Activated CD4-positive, alpha-beta T cell treated with anti-CD3 and anti-CD28 coated beads for 36 hours (primary cell): ENCODE measurements at regions of chr15 and their contacts with region 1.

Region 1: GRCh38 chr15:50315814-50316630 is 39.0 kb downstream of the GABPB1 start:
- DNase-seq: no peak
- ATAC-seq: no peak
- H3K4me3 Mint-ChIP-seq: no peak overlapping the region
- H3K27ac Mint-ChIP-seq: no peak overlapping the region
- H3K4me1 Mint-ChIP-seq: peaks cover 25% of the 10 kb centered on the region
- H3K27me3 Mint-ChIP-seq: no peaks in the 10 kb centered on the region

Region 2: GRCh38 chr15:49235446-49236124 is 1080.4 kb before region 1 on chr15:
- CTCF ChIA-PET with region 1: no interaction called
- POLR2A ChIA-PET with region 1: no interaction called
- intact Hi-C with region 1: loop called in 1 of 2 experiments (anchors 10 kb)
- DNase-seq: peak; percentile 60
- ATAC-seq: peak; percentile 80
- H3K4me3 Mint-ChIP-seq: no peak overlapping the region
- H3K27ac Mint-ChIP-seq: no peak overlapping the region
- H3K4me1 Mint-ChIP-seq: peaks cover 4% of the 10 kb centered on the region
- H3K27me3 Mint-ChIP-seq: no peaks in the 10 kb centered on the region

Region 3: DNA sequence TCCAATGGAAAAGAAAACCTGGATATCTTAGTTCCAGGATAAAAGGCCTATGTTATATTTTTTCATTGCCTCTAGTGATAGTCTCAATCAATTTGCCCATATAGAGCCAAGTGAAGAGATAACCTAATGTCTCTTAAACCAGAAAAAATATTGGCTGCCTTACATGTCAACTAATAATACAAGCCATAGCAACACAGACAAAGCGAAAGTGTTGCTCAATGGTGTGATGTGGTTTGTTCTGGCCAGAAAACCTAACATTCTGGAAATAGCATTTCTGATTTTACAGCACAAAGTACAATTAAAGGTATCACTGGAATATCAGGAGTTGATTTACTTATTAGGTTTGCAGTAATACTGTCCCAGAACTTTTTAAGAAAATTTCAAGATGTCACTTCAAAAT is 298.5 kb before region 1 on chr15:
- CTCF ChIA-PET with region 1: no interaction called
- POLR2A ChIA-PET with region 1: no interaction called
- intact Hi-C with region 1: loop called in 1 of 2 experiments (anchors 10 kb)
- DNase-seq: no peak
- ATAC-seq: no peak
- H3K4me3 Mint-ChIP-seq: no peak overlapping the region
- H3K27ac Mint-ChIP-seq: no peak overlapping the region
- H3K4me1 Mint-ChIP-seq: no peaks in the 10 kb centered on the region
- H3K27me3 Mint-ChIP-seq: peaks cover 4% of the 10 kb centered on the region

Region 4: GRCh38 chr15:50145451-50145872 is 170.6 kb before region 1 on chr15:
- CTCF ChIA-PET with region 1: interaction called, 11 read pairs
- POLR2A ChIA-PET with region 1: no interaction called
- intact Hi-C with region 1: loop called (anchors 2 to 10 kb)
- DNase-seq: no peak
- ATAC-seq: no peak
- H3K4me3 Mint-ChIP-seq: no peak overlapping the region
- H3K27ac Mint-ChIP-seq: no peak overlapping the region
- H3K4me1 Mint-ChIP-seq: peaks cover 32% of the 10 kb centered on the region
- H3K27me3 Mint-ChIP-seq: no peaks in the 10 kb centered on the region

Region 5: DNA sequence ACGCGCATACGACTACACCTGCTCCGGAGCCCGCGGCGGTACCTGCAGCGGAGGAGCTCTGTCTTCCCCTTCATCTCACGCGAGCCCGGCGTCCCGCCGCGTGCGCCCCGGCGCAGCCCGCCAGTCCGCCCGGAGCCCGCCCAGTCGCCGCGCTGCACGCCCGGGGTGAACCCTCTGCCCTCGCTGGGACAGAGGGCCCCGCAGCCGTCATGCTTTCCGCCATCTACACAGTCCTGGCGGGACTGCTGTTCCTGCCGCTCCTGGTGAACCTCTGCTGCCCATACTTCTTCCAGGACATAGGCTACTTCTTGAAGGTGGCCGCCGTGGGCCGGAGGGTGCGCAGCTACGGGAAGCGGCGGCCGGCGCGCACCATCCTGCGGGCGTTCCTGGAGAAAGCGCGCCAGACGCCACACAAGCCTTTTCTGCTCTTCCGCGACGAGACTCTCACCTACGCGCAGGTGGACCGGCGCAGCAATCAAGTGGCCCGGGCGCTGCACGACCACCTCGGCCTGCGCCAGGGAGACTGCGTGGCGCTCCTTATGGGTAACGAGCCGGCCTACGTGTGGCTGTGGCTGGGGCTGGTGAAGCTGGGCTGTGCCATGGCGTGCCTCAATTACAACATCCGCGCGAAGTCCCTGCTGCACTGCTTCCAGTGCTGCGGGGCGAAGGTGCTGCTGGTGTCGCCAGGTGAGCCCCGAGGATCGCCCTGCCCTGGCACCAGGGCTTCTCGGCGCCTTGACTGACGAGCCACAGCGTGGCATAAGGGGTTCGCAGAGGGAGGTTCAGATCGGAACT is 133.6 kb before region 1 on chr15:
- CTCF ChIA-PET with region 1: interaction called, 10 read pairs
- POLR2A ChIA-PET with region 1: no interaction called
- intact Hi-C with region 1: loop called (anchors 1 to 2 kb)
- DNase-seq: peak; percentile 73
- ATAC-seq: peak; percentile 68
- H3K4me3 Mint-ChIP-seq: peak overlapping the region; percentile 85
- H3K27ac Mint-ChIP-seq: peak overlapping the region; percentile 88
- H3K4me1 Mint-ChIP-seq: peaks cover 21% of the 10 kb centered on the region
- H3K27me3 Mint-ChIP-seq: peaks cover 27% of the 10 kb centered on the region

Region 6: DNA sequence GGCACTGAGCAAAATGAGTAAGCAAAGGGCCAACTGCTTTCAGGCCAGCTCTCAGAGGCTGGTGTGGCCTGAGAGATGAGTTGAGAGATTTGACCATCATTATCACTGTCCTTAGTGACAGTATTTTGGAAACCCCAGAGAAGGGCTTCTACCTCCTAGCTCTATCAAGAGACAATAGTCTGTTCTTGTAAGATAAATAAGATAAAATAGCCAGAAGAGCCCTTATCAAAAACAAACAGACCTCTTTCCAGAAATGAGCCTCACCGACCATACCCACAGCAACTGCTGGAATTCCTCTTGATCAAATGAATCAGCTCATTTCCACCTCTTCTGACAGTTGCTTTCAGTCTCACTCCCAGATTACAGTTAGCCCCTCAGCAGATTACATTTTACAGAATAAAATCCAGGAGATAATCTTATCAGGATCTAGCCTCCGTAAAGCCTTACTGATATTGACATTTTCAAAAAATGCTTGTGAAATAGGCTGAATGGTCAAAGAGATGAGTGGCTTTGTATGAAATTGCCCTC is 55.0 kb before region 1 on chr15:
- CTCF ChIA-PET with region 1: interaction called, 5 read pairs
- POLR2A ChIA-PET with region 1: interaction called, 3 read pairs
- intact Hi-C with region 1: loop called in 1 of 2 experiments (anchors 5 kb)
- DNase-seq: no peak
- ATAC-seq: peak; percentile 17
- H3K4me3 Mint-ChIP-seq: peak overlapping the region; percentile 37
- H3K27ac Mint-ChIP-seq: peak overlapping the region; percentile 95
- H3K4me1 Mint-ChIP-seq: peaks cover 69% of the 10 kb centered on the region
- H3K27me3 Mint-ChIP-seq: no peaks in the 10 kb centered on the region

Region 7: GRCh38 chr15:50390554-50391287 is 74.7 kb after region 1 on chr15:
- CTCF ChIA-PET with region 1: no interaction called
- POLR2A ChIA-PET with region 1: no interaction called
- intact Hi-C with region 1: no loop called
- DNase-seq: no peak
- ATAC-seq: no peak
- H3K4me3 Mint-ChIP-seq: no peak overlapping the region
- H3K27ac Mint-ChIP-seq: no peak overlapping the region
- H3K4me1 Mint-ChIP-seq: no peaks in the 10 kb centered on the region
- H3K27me3 Mint-ChIP-seq: no peaks in the 10 kb centered on the region